Thyroid gland (tissue), 4 donors: ENCODE measurements at regions of chr3 and their contacts with region 1.

Region 1: GRCh38 chr3:32934150-32934742 is 17.2 kb upstream of the CCR4 start:
- DNase-seq: peak; percentile 29 to 39
- H3K4me3 ChIP-seq: no peak overlapping the region
- H3K27ac ChIP-seq: no peak overlapping the region
- H3K4me1 ChIP-seq: no peaks in the 10 kb centered on the region
- H3K27me3 ChIP-seq: no peaks in the 10 kb centered on the region
- CTCF ChIP-seq: peak; percentile 31 to 77 (median 56)
- POLR2A ChIP-seq: no peak

Region 2: DNA sequence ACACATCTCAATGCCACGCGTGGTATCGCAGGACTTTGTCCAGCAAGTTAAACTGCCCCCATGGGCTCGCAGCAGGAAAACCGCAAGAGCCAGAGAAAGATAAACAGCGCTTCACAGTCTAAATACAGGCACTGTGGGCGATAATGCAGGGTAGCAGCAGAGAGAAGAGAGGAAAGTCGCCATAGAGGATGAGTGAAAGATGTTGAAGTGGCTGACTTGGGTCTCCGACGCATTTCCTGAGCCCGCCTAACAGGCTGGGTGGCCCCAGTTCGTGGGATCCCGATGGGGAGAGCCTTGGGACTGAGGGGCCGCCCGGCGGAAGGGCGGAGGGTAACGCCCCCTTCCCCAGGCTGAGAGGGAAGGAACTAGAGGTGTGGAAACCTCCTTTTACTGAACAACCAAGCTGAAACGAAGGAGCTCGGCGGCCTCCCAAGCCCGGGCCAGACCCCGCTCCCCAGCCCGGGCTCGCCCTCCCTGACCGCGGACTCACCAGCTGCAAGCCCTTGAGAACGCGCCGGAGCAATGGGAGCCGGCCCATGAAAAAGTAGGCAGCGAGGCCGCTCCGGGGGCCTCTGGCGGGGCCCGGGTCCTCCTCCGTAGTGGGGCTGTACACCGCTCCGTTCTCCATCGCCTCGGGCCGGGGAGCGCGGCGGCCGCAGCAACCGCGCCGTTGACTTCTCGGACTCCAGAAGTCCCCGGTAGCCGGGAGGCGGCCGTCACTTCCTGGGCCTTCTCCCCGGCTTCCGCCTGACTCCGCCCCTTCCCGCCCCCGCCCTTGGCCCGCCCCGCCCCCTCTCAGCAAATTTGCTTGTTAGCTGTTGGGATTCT is 431.9 kb before region 1 on chr3 and contains the start of gene CMTM6:
- intact Hi-C with region 1: loop called (anchors 10 kb)
- DNase-seq: peak; percentile 82
- H3K4me3 ChIP-seq: peak within 1 kb of the TSS; percentile 9 to 94 (median 62)
- H3K27ac ChIP-seq: peak within 1 kb of the TSS; percentile 90 to 92 (median 91)
- H3K4me1 ChIP-seq: peaks cover 0 to 7% of the 10 kb centered on the region in 2 donors
- H3K27me3 ChIP-seq: no peaks in the 10 kb centered on the region
- CTCF ChIP-seq: no peak
- POLR2A ChIP-seq: peak; percentile 16 to 76
- total RNA-seq, gene CMTM6: 63.8 to 124 (median 71.3) TPM

Region 3: GRCh38 chr3:32734756-32735155 is 199.5 kb before region 1 on chr3:
- intact Hi-C with region 1: loop called (anchors 5 kb)
- DNase-seq: no peak
- H3K4me3 ChIP-seq: no peak overlapping the region
- H3K27ac ChIP-seq: no peak overlapping the region
- H3K4me1 ChIP-seq: no peaks in the 10 kb centered on the region
- H3K27me3 ChIP-seq: no peaks in the 10 kb centered on the region
- CTCF ChIP-seq: no peak
- POLR2A ChIP-seq: no peak